Activated naive CD4-positive, alpha-beta T cell treated with anti-CD3 and anti-CD28 coated beads for 36 hours (primary cell): ENCODE measurements at regions of chr2 and their contacts with region 1.

Region 1: GRCh38 chr2:195407782-195408181 is 249.2 kb upstream of the SLC39A10 start:
- DNase-seq: no peak
- H3K4me3 Mint-ChIP-seq: no peak overlapping the region
- H3K27ac Mint-ChIP-seq: no peak overlapping the region
- H3K4me1 Mint-ChIP-seq: peaks cover 18% of the 10 kb centered on the region
- H3K27me3 Mint-ChIP-seq: no peaks in the 10 kb centered on the region

Region 2: DNA sequence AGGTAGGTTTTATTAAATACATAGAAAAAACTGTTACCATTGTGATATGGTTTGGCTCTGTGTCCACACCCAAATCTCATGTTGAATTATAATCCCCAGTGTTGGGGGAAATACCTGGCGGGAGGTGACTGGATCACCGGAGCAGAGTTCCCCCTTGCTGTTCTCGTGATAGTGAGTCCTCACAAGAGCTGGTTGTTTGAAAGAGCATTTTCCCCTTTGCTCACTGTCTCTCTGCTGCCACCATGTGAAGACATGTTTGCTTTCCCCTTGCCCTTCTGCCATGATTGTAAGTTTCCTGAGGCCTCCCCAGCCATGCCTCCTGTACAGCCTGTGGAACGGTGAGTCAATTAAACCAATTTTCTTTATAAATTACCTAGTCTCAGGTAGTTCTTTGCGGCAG is 103.5 kb before region 1 on chr2:
- CTCF ChIA-PET with region 1: no interaction called
- intact Hi-C with region 1: no loop called
- DNase-seq: peak; percentile 10
- H3K4me3 Mint-ChIP-seq: no peak overlapping the region
- H3K27ac Mint-ChIP-seq: no peak overlapping the region
- H3K4me1 Mint-ChIP-seq: no peaks in the 10 kb centered on the region
- H3K27me3 Mint-ChIP-seq: no peaks in the 10 kb centered on the region

Region 3: GRCh38 chr2:195923889-195924288 is 516.1 kb after region 1 on chr2:
- CTCF ChIA-PET with region 1: no interaction called
- intact Hi-C with region 1: loop called (anchors 5 kb)
- DNase-seq: no peak
- H3K4me3 Mint-ChIP-seq: no peak overlapping the region
- H3K27ac Mint-ChIP-seq: no peak overlapping the region
- H3K4me1 Mint-ChIP-seq: no peaks in the 10 kb centered on the region
- H3K27me3 Mint-ChIP-seq: no peaks in the 10 kb centered on the region